Posterior cingulate gyrus (tissue), 11 donors: ENCODE measurements at regions of chr11 and their contacts with region 1.

Region 1: GRCh38 chr11:17743808-17744119 is 9.2 kb downstream of the KCNC1 start:
- DNase-seq: peak in 2 of 10 donors; percentile 41 to 77

Region 2: DNA sequence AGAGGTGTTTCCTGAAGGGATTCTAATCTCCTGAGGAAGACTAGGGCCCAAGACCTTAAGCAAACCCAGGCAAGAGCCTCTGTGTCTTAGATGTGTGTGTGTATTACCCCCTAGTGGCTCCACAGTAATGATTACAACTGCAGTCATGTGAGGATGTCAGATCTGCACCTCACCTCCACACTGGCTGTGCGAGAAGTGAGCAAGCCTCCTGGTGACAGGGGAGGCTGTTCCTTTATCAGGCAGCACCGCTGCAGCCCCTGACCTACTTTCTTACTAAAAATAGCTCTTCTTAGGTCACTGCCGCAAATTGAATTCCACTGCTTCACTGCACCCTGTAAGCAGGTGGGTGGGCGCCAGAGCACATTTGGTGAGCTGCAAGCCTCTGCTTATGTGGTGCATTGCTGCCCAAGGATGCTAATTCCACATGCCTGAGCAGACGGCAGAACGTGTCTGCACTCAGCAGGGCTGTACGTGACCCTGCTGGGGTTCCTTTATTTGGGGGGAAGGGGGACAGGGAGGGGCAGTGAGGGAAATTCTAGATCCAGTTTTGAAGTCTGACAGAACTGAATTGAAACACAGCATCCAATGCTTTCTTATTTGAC is 103.2 kb after region 1 on chr11:
- intact Hi-C with region 1: loop called (anchors 5 kb)
- DNase-seq: peak in 6 of 10 donors; percentile 19 to 82 (median 56)